HAP-1 (cell line): ENCODE measurements at regions of chr10 and their contacts with region 1.

Region 1: DNA sequence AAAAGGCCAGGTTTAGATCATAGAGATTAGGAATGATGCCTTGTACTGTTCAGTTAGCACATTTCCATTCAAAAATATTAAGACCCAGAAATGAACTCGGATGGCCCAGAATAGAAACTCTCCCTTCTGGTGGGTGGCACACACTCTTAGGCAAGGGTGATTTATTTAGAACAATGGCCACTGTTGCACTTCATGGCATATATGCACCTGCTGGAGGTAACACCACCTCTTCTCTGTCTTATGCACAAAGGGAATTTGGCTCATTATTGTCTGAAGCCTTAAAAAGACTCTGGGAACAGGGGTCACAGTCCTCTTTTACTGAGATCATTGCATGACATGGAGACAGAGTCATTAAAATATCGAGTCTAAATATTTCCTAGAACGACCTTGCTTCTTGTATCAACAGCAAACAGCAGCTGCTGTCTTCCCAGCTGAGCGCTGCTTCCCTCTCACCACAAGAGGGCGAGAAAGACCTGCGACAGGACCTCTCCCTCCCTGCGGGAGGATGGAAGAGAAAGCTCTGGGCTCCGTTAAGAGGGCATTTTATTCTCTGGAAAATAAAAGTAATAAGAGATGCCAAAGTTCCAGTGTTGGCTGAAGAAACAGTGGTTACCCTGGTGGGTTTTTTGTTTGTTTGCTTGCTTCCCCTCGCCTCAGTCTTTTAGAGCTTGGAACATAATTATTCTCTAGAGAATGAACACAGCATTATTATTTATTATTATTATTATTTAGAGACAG is 13.6 kb upstream of the BAMBI start:
- DNase-seq: peak; percentile 79 to 85
- H3K4me3 ChIP-seq: no peak overlapping the region
- H3K4me1 ChIP-seq: no peaks in the 10 kb centered on the region; the same call in 1 of the 2 replicates
- H3K27me3 ChIP-seq: no peaks in the 10 kb centered on the region

Region 2: GRCh38 chr10:28326516-28327490 is 336.9 kb before region 1 on chr10:
- in situ Hi-C with region 1: no loop called
- DNase-seq: peak in 1 of 2 experiments; percentile 23
- H3K4me3 ChIP-seq: no peak overlapping the region
- H3K4me1 ChIP-seq: peaks cover 9% of the 10 kb centered on the region
- H3K27me3 ChIP-seq: no peaks in the 10 kb centered on the region

Region 3: DNA sequence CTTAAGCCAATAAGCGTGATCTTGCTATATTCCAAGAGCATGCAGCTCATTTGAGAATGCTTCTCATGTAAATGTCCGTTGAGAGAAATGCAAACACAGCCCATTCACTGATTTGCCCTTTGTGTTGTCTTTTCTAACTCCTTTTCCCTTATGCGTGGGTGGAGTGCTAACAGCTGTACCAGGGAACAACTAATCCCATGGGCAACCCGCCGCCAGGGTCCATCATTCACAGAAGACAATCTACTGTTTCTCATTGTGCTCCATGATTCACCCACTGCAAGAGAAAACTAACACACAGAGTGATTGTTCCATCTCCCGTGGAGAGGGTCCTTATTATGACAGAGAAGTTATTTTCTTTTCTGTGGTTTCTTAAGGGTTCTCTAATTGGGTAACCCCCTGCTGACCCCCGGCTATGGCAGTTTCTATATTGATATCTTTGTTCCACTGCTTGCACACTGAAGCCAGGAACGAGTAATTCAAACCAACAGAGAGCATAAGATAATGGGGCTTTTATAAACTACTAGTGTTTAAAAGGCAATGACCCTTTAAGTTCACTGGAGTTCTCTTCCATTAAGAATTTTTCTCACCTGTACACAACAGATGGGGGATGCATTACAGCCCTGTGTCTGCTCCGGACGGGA is 312.3 kb after region 1 on chr10:
- in situ Hi-C with region 1: no loop called
- DNase-seq: peak; percentile 83 to 91
- H3K4me3 ChIP-seq: no peak overlapping the region
- H3K4me1 ChIP-seq: peaks cover 10% of the 10 kb centered on the region
- H3K27me3 ChIP-seq: no peaks in the 10 kb centered on the region

Region 4: DNA sequence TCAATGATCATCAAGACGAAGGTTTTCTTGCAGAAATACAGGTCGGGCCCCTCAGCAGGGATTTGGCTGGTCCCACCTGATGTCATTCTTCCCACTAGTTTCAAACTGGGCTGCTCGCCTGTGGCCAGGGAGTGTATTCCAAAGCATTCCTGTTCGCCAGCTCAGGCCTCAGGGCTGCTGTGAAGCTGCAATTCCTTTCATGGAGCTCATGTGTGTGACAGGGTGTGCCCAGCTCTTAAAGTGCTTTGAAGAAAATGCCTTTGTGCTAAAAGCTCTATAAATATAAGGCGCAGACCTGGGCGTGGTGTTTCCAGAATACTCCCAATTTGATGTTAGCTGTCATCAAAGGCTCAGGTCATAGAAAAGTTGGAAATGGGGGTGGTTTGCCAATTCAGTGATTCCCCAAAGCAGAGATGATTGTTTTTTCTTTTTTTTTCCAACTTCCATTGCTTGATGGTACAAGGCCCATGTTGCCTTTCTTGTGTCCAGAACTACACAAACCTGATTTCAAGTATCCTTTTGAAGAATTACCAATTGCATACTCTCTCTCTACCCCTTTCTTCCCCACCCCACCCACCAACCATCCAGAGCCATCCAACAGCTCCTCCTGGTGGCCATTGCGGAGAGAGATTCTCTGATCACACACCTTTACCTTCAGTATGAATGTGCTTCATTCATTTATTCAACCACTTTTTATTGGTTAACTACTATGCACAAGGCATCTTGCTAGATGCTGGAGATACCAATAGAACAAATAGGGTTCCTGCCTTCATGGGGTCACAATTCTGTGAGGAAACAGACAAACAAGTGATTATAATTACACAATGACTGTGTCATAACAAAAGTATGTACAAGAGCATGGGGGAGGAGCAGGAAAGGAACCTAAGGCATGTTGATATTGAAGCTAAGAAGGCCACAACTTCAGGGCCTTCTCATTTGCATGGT is 327.9 kb after region 1 on chr10:
- in situ Hi-C with region 1: loop called (anchors 5 kb)
- DNase-seq: peak; percentile 71 to 83
- H3K4me3 ChIP-seq: no peak overlapping the region
- H3K4me1 ChIP-seq: peaks cover 17% of the 10 kb centered on the region
- H3K27me3 ChIP-seq: no peaks in the 10 kb centered on the region

Region 5: DNA sequence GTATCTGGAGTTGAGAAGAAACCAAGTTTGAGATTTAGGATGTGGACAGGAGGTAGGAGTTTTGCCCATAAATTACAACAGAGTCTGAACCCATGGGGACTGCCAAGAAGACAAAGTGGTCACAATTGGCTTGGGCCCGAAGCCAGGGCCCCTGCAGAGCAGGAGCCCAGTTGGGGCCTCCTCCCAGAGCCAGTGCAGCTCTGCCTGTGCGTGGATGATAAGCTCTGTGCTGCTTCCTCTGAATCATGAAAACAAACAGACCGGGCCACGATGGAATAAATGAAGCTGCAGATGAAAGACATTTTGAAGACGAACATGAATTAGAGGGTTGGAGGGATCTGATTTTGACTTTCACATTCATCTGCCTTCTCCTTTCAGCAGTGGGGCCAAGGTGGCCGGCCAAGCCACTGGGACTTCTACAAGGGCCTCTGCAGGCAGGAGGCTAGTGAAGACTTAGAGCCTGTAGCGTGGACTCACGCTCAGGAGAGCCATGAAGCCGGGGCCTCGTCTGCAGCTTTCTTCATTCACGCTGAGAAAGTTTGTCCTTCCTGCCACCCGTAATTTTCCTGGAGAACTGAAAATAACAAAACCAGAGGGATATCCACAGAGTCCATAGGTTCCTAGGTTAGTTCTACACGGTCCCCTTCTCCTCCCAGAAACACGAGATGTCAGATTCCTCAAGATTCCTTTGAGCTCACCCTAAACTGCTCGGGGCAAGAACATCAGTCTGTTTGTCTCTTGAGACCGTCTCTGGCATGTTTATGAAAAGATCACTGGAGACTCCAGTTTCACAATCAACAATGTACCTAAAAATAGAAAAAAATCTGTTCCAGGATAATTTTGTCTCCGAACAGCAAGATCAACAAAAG is 468.4 kb after region 1 on chr10:
- in situ Hi-C with region 1: loop called (anchors 25 kb)
- DNase-seq: no peak
- H3K4me3 ChIP-seq: no peak overlapping the region
- H3K4me1 ChIP-seq: peaks cover 13% of the 10 kb centered on the region
- H3K27me3 ChIP-seq: no peaks in the 10 kb centered on the region

Region 6: DNA sequence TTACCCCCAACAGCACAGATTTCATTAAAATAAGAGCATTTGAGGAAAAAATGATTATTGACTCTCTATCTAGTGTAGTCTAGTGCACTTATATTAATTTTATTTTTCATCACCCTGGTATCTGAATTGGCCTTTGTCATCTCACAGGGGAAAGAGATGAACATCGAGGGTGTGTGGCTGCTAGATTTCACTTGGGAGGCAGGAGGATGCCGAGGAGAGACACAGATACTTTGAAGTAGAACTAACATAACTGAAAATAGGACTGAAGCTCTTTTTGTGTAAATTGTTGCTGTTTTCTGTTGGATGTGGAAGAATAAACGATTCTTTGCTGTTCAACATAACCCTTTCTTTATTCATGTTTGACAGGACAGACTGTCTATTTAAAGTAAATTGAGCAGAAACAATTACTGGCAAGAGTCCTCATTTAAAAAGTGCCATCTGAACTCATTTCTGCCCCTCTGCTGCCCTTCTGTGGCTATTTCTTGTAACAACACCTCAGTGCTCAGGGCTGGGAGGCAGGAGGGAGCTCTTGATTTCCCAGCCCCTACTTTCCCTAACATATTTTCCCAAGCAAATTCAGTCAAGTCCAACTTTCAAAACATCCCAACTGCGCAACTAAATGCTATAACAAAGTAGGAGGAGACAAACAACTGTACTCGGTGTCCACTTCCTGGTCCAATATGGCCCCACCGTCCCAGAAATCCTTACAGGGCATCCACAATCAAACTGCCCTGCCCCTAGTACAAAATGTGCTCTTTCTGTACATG is 640.7 kb after region 1 on chr10:
- in situ Hi-C with region 1: loop called (anchors 10 kb)
- DNase-seq: peak; percentile 70 to 74
- H3K4me3 ChIP-seq: no peak overlapping the region
- H3K4me1 ChIP-seq: peaks cover 4% of the 10 kb centered on the region
- H3K27me3 ChIP-seq: peaks cover 8% of the 10 kb centered on the region